ENCODE measurements at regions of chr6 and their contacts with region 1.

Region 1: GRCh38 chr6:29909985-29910384 is 32.3 kb upstream of the HLA-A start:
- DNase-seq: no peak

Region 2: DNA sequence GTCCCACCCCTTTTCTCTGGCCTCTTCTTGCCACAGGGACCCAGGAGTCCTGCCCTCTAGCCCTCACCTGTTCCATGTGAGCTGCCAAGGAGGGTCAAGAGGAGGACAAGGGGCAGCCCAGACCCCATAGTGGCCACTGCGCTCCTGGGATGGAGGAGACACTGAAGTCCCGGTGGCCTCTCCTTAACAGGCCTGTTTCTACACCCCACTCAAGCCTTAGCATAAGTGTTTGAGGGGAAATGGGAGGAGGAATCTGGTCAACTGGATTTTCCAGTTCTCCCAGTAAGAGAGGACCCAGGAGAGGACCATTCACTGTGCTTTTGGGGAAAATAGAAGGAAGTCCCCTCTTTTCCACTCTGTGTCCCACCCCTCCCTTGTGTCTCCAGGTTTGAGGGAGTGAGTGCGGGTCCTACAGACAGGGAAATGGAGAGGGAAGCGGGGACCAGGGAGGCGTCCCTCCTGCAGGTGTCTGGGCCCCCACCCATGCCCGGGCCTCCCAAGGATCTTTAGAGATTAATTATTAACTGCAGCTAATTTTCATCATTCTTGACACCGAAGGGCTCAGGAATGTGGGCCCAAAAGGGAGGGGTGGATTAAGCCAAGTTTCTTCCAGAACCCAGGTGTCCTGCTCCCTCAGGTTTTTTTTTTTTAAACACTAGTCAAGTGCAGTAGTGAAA is 1022.1 kb after region 1 on chr6 and contains the start of gene SFTA2:
- intact Hi-C with region 1: loop called in 1 of 2 experiments (anchors 5 kb)
- DNase-seq: no peak
- total RNA-seq, gene SFTA2: 0.29 TPM in 1 of 2 donors, not detected in the other